ENCODE measurements at regions of chr19 and their contacts with region 1.

Region 1: DNA sequence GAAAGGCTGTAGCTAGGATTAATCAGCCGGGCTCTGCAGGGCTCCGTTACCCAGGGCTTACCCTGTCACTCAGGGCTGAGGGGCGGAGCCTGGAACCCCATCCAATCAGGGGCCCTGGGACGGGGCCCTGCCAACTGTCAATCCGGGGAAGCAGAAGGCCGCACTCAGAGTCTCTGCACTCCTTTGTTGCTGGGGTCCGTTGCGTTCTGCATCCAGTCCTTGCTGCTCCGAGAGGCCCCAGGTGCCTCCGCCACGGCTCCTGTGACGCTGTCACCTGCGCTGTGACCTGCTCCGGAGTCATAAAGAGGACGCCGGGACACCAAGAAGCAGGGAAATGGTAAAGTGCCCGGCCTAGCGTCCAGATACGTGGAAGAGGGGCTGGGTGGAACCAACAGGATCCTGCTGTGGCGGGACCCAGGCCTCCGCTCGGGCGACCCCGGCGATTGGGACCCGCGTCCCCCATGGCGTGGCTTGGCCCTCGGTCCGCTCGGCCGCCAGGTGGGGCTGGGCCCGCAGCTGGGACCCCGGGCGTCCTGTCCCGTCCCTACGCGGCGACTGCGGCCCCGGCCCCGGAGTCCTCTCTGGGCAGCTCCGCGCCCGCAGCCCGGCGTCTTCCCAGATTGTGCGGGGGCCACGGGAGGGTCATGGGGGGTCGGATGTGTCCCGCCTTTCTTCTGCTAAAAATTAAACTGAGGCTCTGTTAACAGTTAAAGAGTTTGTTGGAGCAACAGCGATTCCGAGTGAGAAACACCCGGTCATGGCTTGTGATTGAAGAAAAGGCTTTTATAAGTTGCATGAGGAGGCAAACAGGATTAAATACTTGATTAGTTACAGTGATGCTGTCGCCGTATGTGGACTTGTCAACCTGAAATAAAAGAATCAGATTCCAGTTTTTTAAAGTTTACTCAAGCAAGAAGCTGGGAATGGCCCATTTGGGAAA is at the start of gene ZNF491:
- DNase-seq: peak; percentile 97
- ATAC-seq: peak; percentile 98
- H3K4me3 Mint-ChIP-seq: peak within 1 kb of the TSS; percentile 84
- H3K27ac Mint-ChIP-seq: peak within 1 kb of the TSS; percentile 88
- H3K4me1 Mint-ChIP-seq: peaks cover 18% of the 10 kb centered on the region
- H3K27me3 Mint-ChIP-seq: peaks cover 46% of the 10 kb centered on the region
- CTCF ChIP-seq: no peak
- total RNA-seq, gene ZNF491: 1.1 to 2.1 TPM (median 1.3 TPM) in 3 replicates

Region 2: DNA sequence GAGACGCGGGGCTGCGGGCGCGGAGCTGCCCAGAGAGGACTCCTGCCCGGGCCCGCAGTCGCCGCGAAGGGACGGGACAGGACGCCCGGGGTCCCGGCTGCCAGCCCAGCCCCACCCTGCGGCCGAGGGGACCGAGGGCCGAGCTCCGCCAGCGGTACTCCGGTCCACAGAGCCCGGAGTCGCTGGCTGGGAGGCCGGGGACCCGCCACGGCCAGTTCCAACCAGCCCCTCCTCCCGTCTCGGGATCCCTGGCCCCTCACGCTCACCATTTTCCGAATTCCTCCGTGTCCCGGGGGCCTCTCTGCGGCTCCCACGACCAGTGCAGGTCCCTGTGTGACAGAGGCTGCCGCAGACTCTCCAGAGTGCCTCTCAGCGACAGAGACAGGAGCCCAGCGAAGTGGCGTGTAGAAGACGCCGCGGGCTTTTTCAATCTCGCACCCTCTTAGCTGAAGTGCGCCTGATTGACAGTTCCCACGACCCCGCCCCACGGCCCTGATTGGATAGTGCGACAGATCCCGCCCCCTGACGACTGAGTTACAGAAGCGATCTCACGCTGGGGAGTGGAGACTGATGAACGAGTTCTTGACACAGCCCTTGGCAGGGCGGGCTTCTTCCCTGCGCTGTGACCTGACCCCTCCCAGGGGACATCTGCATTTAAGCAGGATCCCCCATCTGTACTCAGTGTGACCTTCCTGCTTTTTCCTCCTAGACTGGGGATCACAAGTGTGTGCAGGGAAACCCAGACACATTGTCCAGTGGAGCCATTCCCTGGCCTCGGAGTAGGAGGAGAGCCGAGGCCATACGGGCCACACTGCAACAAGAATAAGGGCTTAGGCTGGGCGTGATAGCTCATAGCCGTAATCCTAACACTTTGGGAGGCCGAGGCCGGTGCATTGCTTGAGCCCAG is 103.9 kb before region 1 on chr19:
- CTCF ChIA-PET with region 1: interaction called, 28 read pairs
- POLR2A ChIA-PET with region 1: interaction called, 5 read pairs
- DNase-seq: peak; percentile 99
- ATAC-seq: peak; percentile 91
- H3K4me3 Mint-ChIP-seq: peak overlapping the region; percentile 99
- H3K27ac Mint-ChIP-seq: peak overlapping the region; percentile 99
- H3K4me1 Mint-ChIP-seq: peaks cover 28% of the 10 kb centered on the region
- H3K27me3 Mint-ChIP-seq: peaks cover 14% of the 10 kb centered on the region
- CTCF ChIP-seq: no peak

Region 3: DNA sequence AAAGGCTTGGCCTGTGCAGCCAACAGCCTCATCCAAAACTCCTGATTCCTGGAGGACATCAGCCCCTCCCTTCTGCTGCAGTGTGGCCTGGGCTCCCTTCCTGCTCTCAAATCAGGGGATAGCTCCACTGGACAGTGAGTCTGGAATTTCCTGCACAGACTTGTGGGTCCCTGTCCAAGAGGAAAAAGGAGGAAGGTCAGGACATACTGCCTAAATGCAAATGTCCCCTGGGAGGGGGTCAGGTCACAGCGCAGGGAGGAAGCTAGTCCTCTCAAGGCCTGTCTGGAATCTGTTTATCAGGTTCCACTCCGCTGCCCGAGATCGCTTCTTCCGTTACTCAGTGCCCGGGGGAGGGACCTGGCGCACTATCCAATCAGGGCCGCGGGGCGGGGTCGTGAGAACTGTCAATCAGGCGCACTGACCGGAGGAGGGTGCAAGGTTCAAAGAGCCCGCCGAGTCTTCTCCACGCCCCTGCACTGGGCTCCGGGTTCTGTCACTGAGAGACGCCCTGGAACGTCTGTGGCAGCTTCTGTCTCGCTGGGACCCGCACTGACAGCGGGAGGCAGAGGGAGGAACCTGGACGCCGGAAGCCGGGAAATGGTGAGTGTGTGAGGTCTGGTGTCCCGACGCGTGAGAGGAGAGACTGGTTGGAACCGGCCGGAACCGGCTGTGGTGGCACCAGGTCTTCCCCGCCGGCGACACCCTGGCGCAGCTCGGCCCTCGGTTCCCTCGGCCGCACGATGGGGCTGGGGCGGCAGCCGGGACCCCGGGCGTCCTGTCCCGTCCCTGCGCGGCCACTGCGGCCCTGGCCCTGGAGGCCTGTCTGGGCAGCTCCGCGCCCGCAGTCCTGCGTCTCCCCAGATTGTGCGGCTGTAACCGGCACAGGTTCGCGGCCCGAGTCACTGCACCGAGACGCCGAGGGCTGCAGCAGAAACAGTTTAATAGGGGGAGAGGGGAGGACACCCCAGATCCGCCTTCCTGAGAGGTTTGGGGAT is 31.8 kb before region 1 on chr19 and contains the start of gene ZNF441:
- CTCF ChIA-PET with region 1: interaction called, 14 read pairs
- POLR2A ChIA-PET with region 1: no interaction called
- DNase-seq: peak; percentile 97
- ATAC-seq: peak; percentile 98
- H3K4me3 Mint-ChIP-seq: peak within 1 kb of the TSS; percentile 95
- H3K27ac Mint-ChIP-seq: peak within 1 kb of the TSS; percentile 79
- H3K4me1 Mint-ChIP-seq: peaks cover 4% of the 10 kb centered on the region; the same call in 1 of the 2 replicates
- H3K27me3 Mint-ChIP-seq: peaks cover 70% of the 10 kb centered on the region
- CTCF ChIP-seq: no peak
- total RNA-seq, gene ZNF441: 1.0 to 2.2 TPM (median 1.8 TPM) in 3 replicates

Region 4: GRCh38 chr19:11832253-11832912 is 33.7 kb after region 1 on chr19:
- CTCF ChIA-PET with region 1: interaction called, 11 read pairs
- POLR2A ChIA-PET with region 1: no interaction called
- DNase-seq: no peak
- ATAC-seq: no peak
- H3K4me3 Mint-ChIP-seq: no peak overlapping the region
- H3K27ac Mint-ChIP-seq: no peak overlapping the region
- H3K4me1 Mint-ChIP-seq: peaks cover 4% of the 10 kb centered on the region; the same call in 1 of the 2 replicates
- H3K27me3 Mint-ChIP-seq: no peaks in the 10 kb centered on the region; the same call in 1 of the 2 replicates
- CTCF ChIP-seq: no peak

Region 5: DNA sequence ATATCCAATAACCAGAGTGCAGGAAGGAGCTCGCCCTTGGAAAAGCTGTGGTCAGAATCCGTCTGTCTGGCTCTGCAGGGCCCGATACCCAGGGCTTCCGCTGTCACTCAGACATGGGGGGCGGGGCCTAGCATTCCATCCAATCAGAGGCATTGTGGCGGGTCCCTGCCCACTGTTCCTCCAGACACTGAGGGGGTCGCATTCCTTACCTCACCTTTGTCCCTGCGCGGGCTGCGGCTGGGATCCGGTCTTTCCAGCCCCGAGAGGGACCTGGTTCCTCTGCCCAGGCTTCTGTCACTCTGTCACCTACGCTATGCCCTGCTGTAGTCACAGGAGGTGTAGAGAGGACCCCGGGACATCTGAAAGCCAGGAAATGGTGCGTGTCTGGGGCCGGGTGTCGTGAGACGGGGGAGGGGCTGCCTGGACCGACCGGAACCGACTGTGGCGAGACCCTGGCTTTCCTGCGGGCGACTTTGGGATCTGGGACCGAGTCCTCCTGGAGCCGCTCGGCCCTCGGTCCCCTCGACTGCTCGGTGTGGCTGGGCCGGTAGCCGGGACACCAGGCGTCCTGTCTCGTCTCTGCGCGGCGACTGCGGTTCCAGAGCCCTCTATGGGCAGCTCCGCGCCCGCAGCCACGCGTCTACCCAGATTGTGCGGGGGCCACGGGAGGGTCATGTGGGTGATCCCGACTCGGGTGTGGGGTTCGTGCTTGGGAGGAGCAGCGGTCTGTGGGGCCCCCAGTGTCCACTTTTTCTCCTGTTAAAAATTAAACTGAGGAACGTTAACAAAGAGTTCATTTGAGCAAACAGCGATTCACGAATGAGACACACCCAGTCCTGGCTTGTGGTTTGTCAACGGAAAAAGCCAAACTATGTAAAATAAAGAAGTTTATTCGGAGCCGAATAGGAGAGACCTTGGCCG is 89.2 kb after region 1 on chr19 and contains the start of gene ZNF69:
- CTCF ChIA-PET with region 1: interaction called, 38 read pairs
- POLR2A ChIA-PET with region 1: interaction called, 6 read pairs
- DNase-seq: peak; percentile 98
- ATAC-seq: peak; percentile 98
- H3K4me3 Mint-ChIP-seq: peak within 1 kb of the TSS; percentile 86
- H3K27ac Mint-ChIP-seq: peak within 1 kb of the TSS; percentile 99
- H3K4me1 Mint-ChIP-seq: peaks cover 43% of the 10 kb centered on the region
- H3K27me3 Mint-ChIP-seq: no peaks in the 10 kb centered on the region; the same call in 1 of the 2 replicates
- CTCF ChIP-seq: no peak
- total RNA-seq, gene ZNF69: 24.5 to 28.7 TPM (median 24.6 TPM) in 3 replicates

Region 6: GRCh38 chr19:12064590-12065538 is 266.2 kb after region 1 on chr19 and contains the start of gene ZNF844:
- CTCF ChIA-PET with region 1: interaction called, 13 read pairs
- POLR2A ChIA-PET with region 1: no interaction called
- DNase-seq: peak; percentile 98
- ATAC-seq: peak; percentile 94
- H3K4me3 Mint-ChIP-seq: peak within 1 kb of the TSS; percentile 87
- H3K27ac Mint-ChIP-seq: peak within 1 kb of the TSS; percentile 97
- H3K4me1 Mint-ChIP-seq: peaks cover 12% of the 10 kb centered on the region
- H3K27me3 Mint-ChIP-seq: no peaks in the 10 kb centered on the region
- CTCF ChIP-seq: no peak
- total RNA-seq, gene ZNF844: 9.1 to 10.5 TPM (median 9.4 TPM) in 3 replicates

Measured in WTC11 (cell line).